Vagina (tissue), 2 donors: ENCODE measurements at regions of chr16 and their contacts with region 1.

Region 1: GRCh38 chr16:70523076-70523742 is at the start of gene COG4:
- DNase-seq: no peak
- H3K4me3 ChIP-seq: peak within 1 kb of the TSS; percentile 77 to 89
- H3K27ac ChIP-seq: peak within 1 kb of the TSS; percentile 82
- H3K4me1 ChIP-seq: peaks cover 49% of the 10 kb centered on the region
- H3K27me3 ChIP-seq: no peaks in the 10 kb centered on the region
- CTCF ChIP-seq: no peak
- POLR2A ChIP-seq: no peak
- total RNA-seq, gene COG4: 39.3 TPM

Region 2: GRCh38 chr16:70495425-70496182 is 27.6 kb before region 1 on chr16:
- intact Hi-C with region 1: no loop called
- DNase-seq: no peak
- H3K4me3 ChIP-seq: no peak overlapping the region
- H3K27ac ChIP-seq: no peak overlapping the region
- H3K4me1 ChIP-seq: no peaks in the 10 kb centered on the region
- H3K27me3 ChIP-seq: no peaks in the 10 kb centered on the region
- CTCF ChIP-seq: no peak
- POLR2A ChIP-seq: no peak

Region 3: DNA sequence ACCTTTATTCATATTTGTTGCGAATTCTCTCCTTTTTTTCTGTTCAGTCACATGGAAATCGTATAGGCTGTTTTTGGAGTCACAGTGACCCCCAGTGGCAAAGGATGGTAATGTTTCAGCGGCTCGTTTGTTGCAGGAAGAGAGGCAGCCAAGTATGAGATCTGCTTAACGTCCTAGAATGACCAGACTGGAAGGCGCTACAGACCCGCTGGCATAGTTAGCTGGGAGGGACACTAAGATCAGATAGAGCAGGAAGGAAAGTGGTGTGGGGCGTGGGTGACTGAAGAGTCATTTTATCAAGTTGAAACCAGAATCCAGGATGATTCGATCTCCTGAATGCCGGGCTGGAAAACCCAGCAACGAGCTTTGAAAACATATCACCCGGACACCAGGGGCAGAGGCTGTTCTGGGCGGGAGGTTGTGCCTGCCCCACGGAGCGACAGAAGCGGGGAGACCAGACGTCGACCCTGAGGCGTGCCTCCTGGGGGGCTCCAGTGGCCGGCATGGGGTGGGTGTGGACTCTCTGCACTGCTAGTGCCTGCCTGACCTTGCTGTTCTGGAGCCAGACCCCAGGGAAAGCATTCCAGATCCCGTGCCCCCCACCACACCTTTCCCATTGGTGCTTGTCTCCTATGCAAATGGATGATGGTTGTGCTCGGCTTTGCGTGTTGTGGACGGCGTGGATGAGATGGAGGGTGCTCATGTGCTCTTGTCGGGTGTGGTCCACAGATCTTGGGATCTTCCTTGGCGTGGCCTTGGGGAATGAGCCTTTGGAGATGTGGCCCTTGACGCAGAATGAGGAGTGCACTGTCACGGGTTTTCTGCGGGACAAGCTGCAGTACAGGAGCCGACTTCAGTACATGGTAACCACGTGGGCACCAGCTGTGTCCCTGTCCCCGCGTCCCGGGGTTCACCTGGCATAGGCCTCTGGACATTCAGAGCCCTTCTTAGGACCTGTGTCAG is 130.9 kb after region 1 on chr16:
- intact Hi-C with region 1: loop called (anchors 10 kb)
- DNase-seq: no peak
- H3K4me3 ChIP-seq: peak overlapping the region in 1 of 2 donors; percentile 5
- H3K27ac ChIP-seq: peak overlapping the region; percentile 55
- H3K4me1 ChIP-seq: peaks cover 8% of the 10 kb centered on the region
- H3K27me3 ChIP-seq: no peaks in the 10 kb centered on the region
- CTCF ChIP-seq: peak; percentile 67 to 96 (median 93)
- POLR2A ChIP-seq: no peak

Region 4: DNA sequence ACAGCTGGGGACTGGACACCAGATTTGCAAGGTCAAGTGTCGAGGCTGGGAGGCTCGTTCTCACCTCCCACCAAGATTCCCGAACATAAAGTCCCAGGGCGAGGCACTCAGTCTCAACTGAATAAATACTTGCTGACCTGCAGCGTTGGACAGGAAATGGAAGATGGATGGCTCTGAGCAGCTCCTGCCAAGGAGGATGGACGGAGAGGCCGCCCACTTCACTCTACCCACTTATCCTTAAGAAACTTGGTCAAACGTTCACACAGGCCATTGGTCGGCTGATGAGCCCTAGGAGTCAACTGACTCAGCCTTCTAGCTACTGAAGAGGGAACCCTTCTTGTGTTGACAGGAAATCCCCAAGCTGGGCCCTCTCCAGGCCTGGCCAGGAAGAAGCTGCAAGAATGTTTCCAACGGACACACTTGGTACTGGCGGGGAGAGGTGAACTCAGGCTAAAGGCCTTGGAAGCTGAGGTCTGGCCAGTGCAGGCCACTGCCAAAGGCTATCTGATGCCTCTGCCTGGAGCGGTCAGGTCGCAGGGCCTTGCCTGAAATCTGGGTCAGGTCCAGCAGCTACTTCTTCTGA is 227.8 kb after region 1 on chr16:
- intact Hi-C with region 1: loop called (anchors 10 kb)
- DNase-seq: peak in 1 of 2 donors; percentile 98
- H3K4me3 ChIP-seq: no peak overlapping the region
- H3K27ac ChIP-seq: peak overlapping the region; percentile 79
- H3K4me1 ChIP-seq: peaks cover 85% of the 10 kb centered on the region
- H3K27me3 ChIP-seq: no peaks in the 10 kb centered on the region
- CTCF ChIP-seq: peak in 1 of 3 experiments; percentile 23
- POLR2A ChIP-seq: no peak

Region 5: GRCh38 chr16:71811261-71811803 is 1288.1 kb after region 1 on chr16:
- intact Hi-C with region 1: no loop called
- DNase-seq: no peak
- H3K4me3 ChIP-seq: no peak overlapping the region
- H3K27ac ChIP-seq: no peak overlapping the region
- H3K4me1 ChIP-seq: peaks cover 23% of the 10 kb centered on the region
- H3K27me3 ChIP-seq: no peaks in the 10 kb centered on the region
- CTCF ChIP-seq: no peak
- POLR2A ChIP-seq: no peak